ENCODE measurements at regions of chr4 and their contacts with region 1.

Region 1: GRCh38 chr4:150297861-150298474 is 219.7 kb downstream of the DCLK2 start:
- DNase-seq: peak; percentile 71
- H3K4me3 ChIP-seq: no peak overlapping the region
- H3K27ac ChIP-seq: no peak overlapping the region
- H3K4me1 ChIP-seq: peaks cover 14% of the 10 kb centered on the region
- H3K27me3 ChIP-seq: no peaks in the 10 kb centered on the region

Region 2: GRCh38 chr4:150593996-150594395 is 296.0 kb after region 1 on chr4:
- in situ Hi-C with region 1: loop called (anchors 10 kb)
- DNase-seq: peak; percentile 30
- H3K4me3 ChIP-seq: no peak overlapping the region
- H3K27ac ChIP-seq: no peak overlapping the region
- H3K4me1 ChIP-seq: no peaks in the 10 kb centered on the region
- H3K27me3 ChIP-seq: no peaks in the 10 kb centered on the region

Region 3: DNA sequence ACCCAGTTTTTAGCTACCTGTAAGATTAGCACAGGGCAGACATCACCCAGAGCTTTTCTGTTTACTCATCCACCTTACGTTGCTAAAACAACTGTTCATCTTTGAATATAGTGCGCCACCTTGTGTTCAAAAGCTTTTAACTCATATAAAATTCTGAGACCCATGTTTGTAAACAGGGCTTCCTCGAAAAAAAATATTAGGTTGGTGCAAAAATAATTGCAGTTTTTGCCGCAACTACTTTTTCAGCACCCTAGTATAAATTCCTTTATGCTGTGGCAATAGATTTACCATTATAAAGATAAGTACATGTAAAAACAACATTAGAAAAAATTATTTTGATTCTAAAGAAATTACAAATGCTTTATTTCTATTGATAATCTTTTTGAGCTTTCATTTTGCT is 569.2 kb after region 1 on chr4:
- in situ Hi-C with region 1: loop called (anchors 5 kb)
- DNase-seq: peak; percentile 88
- H3K4me3 ChIP-seq: no peak overlapping the region
- H3K27ac ChIP-seq: no peak overlapping the region
- H3K4me1 ChIP-seq: no peaks in the 10 kb centered on the region
- H3K27me3 ChIP-seq: no peaks in the 10 kb centered on the region

Measured in GM23248 (cell line).